B cell (primary cell): ENCODE measurements at regions of chr14 and their contacts with region 1.

Region 1: DNA sequence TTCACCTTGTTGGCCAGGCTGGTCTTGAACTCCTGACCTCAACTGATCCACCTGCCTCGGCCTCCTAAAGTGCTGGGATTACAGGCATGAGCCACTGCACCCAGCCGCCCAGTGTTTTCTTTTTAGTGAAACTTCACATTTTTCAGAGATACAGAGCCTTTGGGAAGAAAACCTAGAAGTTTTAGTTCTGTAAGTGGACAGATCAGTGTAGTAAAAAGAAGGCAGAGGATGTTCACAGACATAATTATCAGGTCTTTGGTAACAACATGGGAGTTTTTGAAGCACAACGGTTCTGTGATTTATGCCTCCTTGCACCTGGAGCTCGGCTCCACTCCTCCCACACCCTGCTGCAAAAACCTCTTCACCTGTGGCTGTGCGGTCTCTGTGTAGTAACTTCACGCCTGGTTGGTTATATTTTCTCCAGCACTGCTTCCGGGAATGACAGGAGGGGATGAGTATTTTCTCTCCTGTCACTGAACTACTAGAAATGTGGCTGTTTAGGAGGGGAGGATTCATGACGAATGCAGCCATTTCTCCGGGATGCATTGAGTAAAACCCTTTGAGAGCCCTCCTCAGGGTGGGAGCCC is 67.0 kb downstream of the ARF6 start:
- DNase-seq: peak; percentile 77
- ATAC-seq: peak; percentile 68
- H3K4me3 ChIP-seq: peak overlapping the region in 4 of 5 experiments; percentile 0 to 48 (median 24)
- H3K4me3 Mint-ChIP-seq: peak overlapping the region; percentile 78
- H3K27ac ChIP-seq: peak overlapping the region; percentile 74 to 75
- H3K27ac Mint-ChIP-seq: peak overlapping the region; percentile 86
- H3K4me1 ChIP-seq: peaks cover 60 to 65% of the 10 kb centered on the region in 2 donors
- H3K4me1 Mint-ChIP-seq: peaks cover 70% of the 10 kb centered on the region
- H3K27me3 ChIP-seq: no peaks in the 10 kb centered on the region
- H3K27me3 Mint-ChIP-seq: no peaks in the 10 kb centered on the region
- CTCF ChIP-seq: no peak

Region 2: GRCh38 chr14:49614196-49614595 is 345.7 kb before region 1 on chr14:
- CTCF ChIA-PET with region 1: no interaction called
- POLR2A ChIA-PET with region 1: no interaction called
- intact Hi-C with region 1: no loop called
- DNase-seq: no peak
- ATAC-seq: no peak
- H3K4me3 ChIP-seq: no peak overlapping the region
- H3K4me3 Mint-ChIP-seq: no peak overlapping the region
- H3K27ac ChIP-seq: no peak overlapping the region
- H3K27ac Mint-ChIP-seq: no peak overlapping the region
- H3K4me1 ChIP-seq: peaks cover 5 to 10% of the 10 kb centered on the region in 2 donors
- H3K4me1 Mint-ChIP-seq: peaks cover 16% of the 10 kb centered on the region
- H3K27me3 ChIP-seq: no peaks in the 10 kb centered on the region
- H3K27me3 Mint-ChIP-seq: no peaks in the 10 kb centered on the region
- CTCF ChIP-seq: no peak

Region 3: DNA sequence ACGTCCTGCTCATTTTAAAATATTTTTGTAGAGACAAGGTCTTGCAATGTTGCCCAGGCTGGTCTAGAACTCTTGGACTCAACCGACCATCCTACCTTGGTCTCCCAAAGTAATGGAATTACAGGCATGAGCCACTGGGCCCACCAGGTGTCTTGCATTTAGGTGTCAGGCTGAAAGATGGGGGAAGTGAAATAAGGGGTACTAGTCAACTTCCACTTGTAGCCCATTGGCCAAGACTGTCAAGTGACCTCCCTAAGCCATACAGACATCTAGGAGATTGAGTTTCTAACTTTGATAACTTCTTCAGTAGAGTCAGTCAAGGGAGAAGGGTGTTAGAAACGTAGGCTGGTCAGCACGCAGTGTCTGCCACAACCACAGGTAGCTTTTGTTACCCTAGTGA is 35.1 kb before region 1 on chr14:
- CTCF ChIA-PET with region 1: no interaction called
- POLR2A ChIA-PET with region 1: interaction called, 10 read pairs
- intact Hi-C with region 1: loop called (anchors 5 kb)
- DNase-seq: peak; percentile 18
- ATAC-seq: no peak
- H3K4me3 ChIP-seq: no peak overlapping the region
- H3K4me3 Mint-ChIP-seq: no peak overlapping the region
- H3K27ac ChIP-seq: no peak overlapping the region
- H3K27ac Mint-ChIP-seq: no peak overlapping the region
- H3K4me1 ChIP-seq: peaks cover 31 to 38% of the 10 kb centered on the region in 2 donors
- H3K4me1 Mint-ChIP-seq: peaks cover 46% of the 10 kb centered on the region
- H3K27me3 ChIP-seq: no peaks in the 10 kb centered on the region
- H3K27me3 Mint-ChIP-seq: no peaks in the 10 kb centered on the region
- CTCF ChIP-seq: no peak

Region 4: GRCh38 chr14:49940808-49941421 is 19.0 kb before region 1 on chr14:
- CTCF ChIA-PET with region 1: interaction called, 12 read pairs
- POLR2A ChIA-PET with region 1: interaction called, 5 read pairs
- intact Hi-C with region 1: loop called (anchors 2 kb)
- DNase-seq: no peak
- ATAC-seq: no peak
- H3K4me3 ChIP-seq: peak overlapping the region in 1 of 5 experiments; percentile 29
- H3K4me3 Mint-ChIP-seq: peak overlapping the region; percentile 41
- H3K27ac ChIP-seq: peak overlapping the region in 1 of 2 donors; percentile 54
- H3K27ac Mint-ChIP-seq: peak overlapping the region; percentile 65
- H3K4me1 ChIP-seq: peaks cover 22 to 25% of the 10 kb centered on the region in 2 donors
- H3K4me1 Mint-ChIP-seq: peaks cover 44% of the 10 kb centered on the region
- H3K27me3 ChIP-seq: no peaks in the 10 kb centered on the region
- H3K27me3 Mint-ChIP-seq: no peaks in the 10 kb centered on the region
- CTCF ChIP-seq: no peak

Region 5: DNA sequence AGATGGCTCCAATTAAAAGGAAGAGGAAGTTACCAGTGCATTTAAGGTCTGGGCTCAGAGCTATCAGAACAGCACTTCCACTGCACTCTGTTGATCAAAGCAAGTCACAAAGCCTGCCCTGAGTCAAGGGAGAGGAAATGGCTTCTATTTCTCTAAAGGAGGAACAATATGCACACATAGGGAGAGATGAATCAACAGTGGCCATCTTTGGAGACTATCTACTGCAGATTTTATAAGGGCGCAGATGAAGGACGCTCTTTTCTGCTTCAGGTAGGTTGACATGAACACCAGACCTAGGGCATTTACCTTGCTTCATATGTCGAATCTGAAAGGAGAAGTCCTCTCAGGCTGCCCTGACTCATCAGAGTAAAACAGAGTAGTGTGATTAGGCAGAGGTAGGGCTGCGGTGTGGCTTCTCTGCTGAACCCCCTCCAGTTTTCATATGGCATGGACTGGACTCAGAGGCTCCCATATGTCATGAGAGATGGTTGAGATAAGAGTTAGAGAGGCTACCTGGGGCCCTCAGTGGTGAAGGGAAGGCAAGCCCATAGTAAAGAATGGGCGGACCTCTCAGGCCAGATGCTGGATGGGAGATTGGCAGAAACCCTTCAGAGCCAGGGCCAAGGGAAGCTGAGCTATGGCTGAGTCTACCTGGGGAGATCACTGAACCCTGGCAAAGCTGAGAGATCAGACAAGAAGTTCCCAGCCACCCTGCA is 17.4 kb after region 1 on chr14:
- CTCF ChIA-PET with region 1: interaction called, 13 read pairs
- POLR2A ChIA-PET with region 1: interaction called, 19 read pairs
- intact Hi-C with region 1: loop called (anchors 2 kb)
- DNase-seq: peak; percentile 80
- ATAC-seq: peak; percentile 85
- H3K4me3 ChIP-seq: peak overlapping the region; percentile 26 to 69 (median 48)
- H3K4me3 Mint-ChIP-seq: peak overlapping the region; percentile 83
- H3K27ac ChIP-seq: peak overlapping the region; percentile 84 to 87
- H3K27ac Mint-ChIP-seq: peak overlapping the region; percentile 90
- H3K4me1 ChIP-seq: peaks cover 85 to 88% of the 10 kb centered on the region in 2 donors
- H3K4me1 Mint-ChIP-seq: peaks cover 80% of the 10 kb centered on the region
- H3K27me3 ChIP-seq: no peaks in the 10 kb centered on the region
- H3K27me3 Mint-ChIP-seq: no peaks in the 10 kb centered on the region
- CTCF ChIP-seq: no peak

Region 6: GRCh38 chr14:50173891-50174290 is 214.0 kb after region 1 on chr14:
- CTCF ChIA-PET with region 1: no interaction called
- POLR2A ChIA-PET with region 1: no interaction called
- intact Hi-C with region 1: no loop called
- DNase-seq: no peak
- ATAC-seq: no peak
- H3K4me3 ChIP-seq: no peak overlapping the region
- H3K4me3 Mint-ChIP-seq: no peak overlapping the region
- H3K27ac ChIP-seq: no peak overlapping the region
- H3K27ac Mint-ChIP-seq: no peak overlapping the region
- H3K4me1 ChIP-seq: no peaks in the 10 kb centered on the region
- H3K4me1 Mint-ChIP-seq: no peaks in the 10 kb centered on the region
- H3K27me3 ChIP-seq: no peaks in the 10 kb centered on the region
- H3K27me3 Mint-ChIP-seq: no peaks in the 10 kb centered on the region
- CTCF ChIP-seq: no peak